ENCODE measurements at regions of chr2 and their contacts with region 1.

Region 1: GRCh38 chr2:71545572-71546274 is 92.4 kb downstream of the DYSF start:
- DNase-seq: peak; percentile 43
- H3K4me3 Mint-ChIP-seq: no peak overlapping the region
- H3K27ac Mint-ChIP-seq: no peak overlapping the region
- H3K4me1 Mint-ChIP-seq: peaks cover 9% of the 10 kb centered on the region
- H3K27me3 Mint-ChIP-seq: peaks cover 17% of the 10 kb centered on the region

Region 2: GRCh38 chr2:71798266-71799012 is 252.7 kb after region 1 on chr2:
- CTCF ChIA-PET with region 1: interaction called, 10 read pairs
- POLR2A ChIA-PET with region 1: no interaction called
- DNase-seq: peak; percentile 18
- H3K4me3 Mint-ChIP-seq: no peak overlapping the region
- H3K27ac Mint-ChIP-seq: no peak overlapping the region
- H3K4me1 Mint-ChIP-seq: no peaks in the 10 kb centered on the region
- H3K27me3 Mint-ChIP-seq: no peaks in the 10 kb centered on the region